ENCODE measurements at regions of chr6 and their contacts with region 1.

Region 1: DNA sequence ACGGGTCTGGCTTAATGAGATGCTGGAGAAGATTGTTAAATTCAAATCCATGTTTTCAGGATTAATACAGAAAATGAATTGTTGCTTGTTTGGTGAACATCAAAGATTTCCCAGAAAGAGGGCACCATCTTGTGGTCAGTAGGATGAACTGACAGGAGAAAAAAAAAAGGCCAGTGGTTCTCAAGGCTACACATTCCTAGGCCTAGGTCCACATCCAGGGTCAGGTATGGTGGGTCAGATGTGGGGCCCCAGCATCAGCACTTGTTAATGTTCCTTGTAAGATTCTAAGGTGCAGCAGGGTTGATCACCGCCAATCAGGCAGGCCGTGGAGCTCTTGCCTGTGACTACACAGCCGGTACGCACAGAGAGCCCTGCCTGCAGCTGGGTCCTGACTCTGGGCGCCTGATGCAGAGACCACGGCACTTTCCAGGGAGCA is 34.0 kb upstream of the FOXO3 start:
- DNase-seq: no peak
- ATAC-seq: peak in 1 of 2 donors; percentile 57

Region 2: GRCh38 chr6:107981695-107982094 is 545.1 kb before region 1 on chr6:
- intact Hi-C with region 1: loop called (anchors 2 to 10 kb)
- DNase-seq: no peak
- ATAC-seq: no peak

Region 3: GRCh38 chr6:107989166-107990094 is 537.3 kb before region 1 on chr6:
- intact Hi-C with region 1: loop called in 1 of 2 experiments (anchors 10 kb)
- DNase-seq: no peak
- ATAC-seq: no peak

Region 4: GRCh38 chr6:108113557-108114519 is 412.9 kb before region 1 on chr6:
- intact Hi-C with region 1: loop called (anchors 5 to 10 kb)
- DNase-seq: no peak
- ATAC-seq: peak; percentile 29 to 40